CD4-positive, alpha-beta T cell (primary cell): ENCODE measurements at regions of chr11 and their contacts with region 1.

Region 1: GRCh38 chr11:12189543-12190235 is 79.3 kb downstream of the MICAL2 start:
- DNase-seq: peak; percentile 25 to 77 (median 40)
- ATAC-seq: peak; percentile 53
- H3K4me3 ChIP-seq: peak overlapping the region; percentile 32
- H3K4me3 Mint-ChIP-seq: peak overlapping the region; percentile 66
- H3K27ac ChIP-seq: peak overlapping the region in 1 of 2 donors; percentile 14
- H3K27ac Mint-ChIP-seq: peak overlapping the region; percentile 73
- H3K4me1 ChIP-seq: peaks cover 31% of the 10 kb centered on the region
- H3K4me1 Mint-ChIP-seq: peaks cover 50% of the 10 kb centered on the region
- H3K27me3 ChIP-seq: no peaks in the 10 kb centered on the region
- H3K27me3 Mint-ChIP-seq: no peaks in the 10 kb centered on the region
- CTCF ChIP-seq: no peak

Region 2: DNA sequence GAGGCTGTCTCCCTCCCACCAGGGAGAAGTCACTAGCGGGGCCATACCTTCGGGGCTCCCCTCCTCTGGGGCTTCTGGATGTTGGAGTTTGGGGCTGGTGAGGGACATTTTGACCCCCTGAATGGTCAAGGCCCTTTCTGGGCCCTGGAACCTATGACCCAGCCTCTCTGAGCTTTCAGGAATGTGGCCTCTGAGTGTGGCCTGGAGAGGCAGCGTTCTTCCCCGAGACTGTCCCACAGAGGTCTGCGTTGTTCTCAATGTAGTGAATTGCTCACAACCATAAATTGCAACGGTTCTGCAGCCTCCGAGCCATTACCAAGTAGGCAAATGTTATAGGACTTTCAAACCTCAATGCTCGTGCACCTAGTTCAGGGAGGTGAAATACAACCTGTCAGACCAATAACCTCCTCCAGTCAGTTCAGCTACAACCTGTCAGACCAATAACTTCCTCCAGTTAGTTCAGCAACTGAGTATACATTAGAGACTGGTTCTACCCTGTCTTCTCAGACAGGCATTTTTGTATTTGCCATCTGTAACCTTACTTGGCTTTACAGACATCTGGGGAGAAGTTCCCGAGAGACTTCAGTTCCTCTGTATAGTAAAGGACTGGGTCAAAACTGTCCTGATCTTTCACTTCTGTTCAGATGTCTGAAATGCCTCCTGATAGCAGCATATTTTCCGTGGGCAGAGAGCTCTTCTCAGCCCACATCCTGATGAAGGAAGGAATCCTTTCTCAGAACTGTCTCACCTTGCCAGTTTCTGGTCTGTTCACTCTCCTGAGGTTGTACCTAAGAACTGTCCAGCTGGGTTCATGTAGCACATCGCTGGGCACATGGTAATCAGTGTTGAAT is 45.1 kb before region 1 on chr11:
- CTCF ChIA-PET with region 1: no interaction called
- POLR2A ChIA-PET with region 1: no interaction called
- intact Hi-C with region 1: loop called in 1 of 2 experiments (anchors 5 kb)
- DNase-seq: no peak
- ATAC-seq: no peak
- H3K4me3 ChIP-seq: no peak overlapping the region
- H3K4me3 Mint-ChIP-seq: peak overlapping the region; percentile 13
- H3K27ac ChIP-seq: no peak overlapping the region
- H3K27ac Mint-ChIP-seq: peak overlapping the region; percentile 49
- H3K4me1 ChIP-seq: peaks cover 57% of the 10 kb centered on the region
- H3K4me1 Mint-ChIP-seq: peaks cover 70% of the 10 kb centered on the region
- H3K27me3 ChIP-seq: no peaks in the 10 kb centered on the region
- H3K27me3 Mint-ChIP-seq: no peaks in the 10 kb centered on the region
- CTCF ChIP-seq: no peak

Region 3: GRCh38 chr11:12200279-12201010 is 10.8 kb after region 1 on chr11:
- CTCF ChIA-PET with region 1: interaction called, 8 read pairs
- POLR2A ChIA-PET with region 1: interaction called, 13 read pairs
- intact Hi-C with region 1: no loop called
- DNase-seq: peak in 2 of 14 experiments; percentile 27 to 28
- ATAC-seq: no peak
- H3K4me3 ChIP-seq: no peak overlapping the region
- H3K4me3 Mint-ChIP-seq: no peak overlapping the region
- H3K27ac ChIP-seq: peak overlapping the region in 1 of 2 donors; percentile 22
- H3K27ac Mint-ChIP-seq: peak overlapping the region; percentile 89
- H3K4me1 ChIP-seq: peaks cover 53% of the 10 kb centered on the region
- H3K4me1 Mint-ChIP-seq: peaks cover 70% of the 10 kb centered on the region
- H3K27me3 ChIP-seq: no peaks in the 10 kb centered on the region
- H3K27me3 Mint-ChIP-seq: no peaks in the 10 kb centered on the region
- CTCF ChIP-seq: no peak

Region 4: GRCh38 chr11:12229450-12230229 is 40.0 kb after region 1 on chr11:
- CTCF ChIA-PET with region 1: interaction called, 3 read pairs
- POLR2A ChIA-PET with region 1: interaction called, 69 read pairs
- intact Hi-C with region 1: loop called (anchors 2 to 5 kb)
- DNase-seq: no peak
- ATAC-seq: no peak
- H3K4me3 ChIP-seq: no peak overlapping the region
- H3K4me3 Mint-ChIP-seq: no peak overlapping the region
- H3K27ac ChIP-seq: no peak overlapping the region
- H3K27ac Mint-ChIP-seq: no peak overlapping the region
- H3K4me1 ChIP-seq: peaks cover 16% of the 10 kb centered on the region
- H3K4me1 Mint-ChIP-seq: peaks cover 17% of the 10 kb centered on the region
- H3K27me3 ChIP-seq: no peaks in the 10 kb centered on the region
- H3K27me3 Mint-ChIP-seq: no peaks in the 10 kb centered on the region
- CTCF ChIP-seq: no peak